ENCODE measurements at regions of chr9 and their contacts with region 1.

Region 1: DNA sequence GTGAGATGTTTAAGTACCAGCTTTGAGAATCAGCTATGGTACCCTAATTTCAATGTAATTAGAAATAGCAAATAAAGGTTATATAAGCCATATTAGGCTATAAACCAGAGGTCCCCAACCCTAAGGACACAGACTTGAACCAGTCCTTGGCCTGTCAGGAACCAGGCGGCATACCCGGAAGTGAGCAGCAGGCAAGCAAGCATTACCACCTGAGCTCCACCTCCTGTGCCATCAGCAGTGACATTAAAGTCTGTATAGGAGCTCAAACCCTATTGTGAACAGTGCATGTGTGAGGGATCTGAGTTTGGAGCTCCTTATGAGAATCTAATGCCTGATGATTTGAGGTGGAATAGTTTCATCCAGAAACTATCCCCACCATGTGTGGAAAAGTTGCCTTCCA is 1009.5 kb downstream of the PTPRD start:
- DNase-seq: no peak
- ATAC-seq: no peak
- H3K4me3 ChIP-seq: no peak overlapping the region
- H3K27ac ChIP-seq: no peak overlapping the region
- H3K4me1 ChIP-seq: no peaks in the 10 kb centered on the region
- H3K27me3 ChIP-seq: no peaks in the 10 kb centered on the region
- CTCF ChIP-seq: no peak

Region 2: DNA sequence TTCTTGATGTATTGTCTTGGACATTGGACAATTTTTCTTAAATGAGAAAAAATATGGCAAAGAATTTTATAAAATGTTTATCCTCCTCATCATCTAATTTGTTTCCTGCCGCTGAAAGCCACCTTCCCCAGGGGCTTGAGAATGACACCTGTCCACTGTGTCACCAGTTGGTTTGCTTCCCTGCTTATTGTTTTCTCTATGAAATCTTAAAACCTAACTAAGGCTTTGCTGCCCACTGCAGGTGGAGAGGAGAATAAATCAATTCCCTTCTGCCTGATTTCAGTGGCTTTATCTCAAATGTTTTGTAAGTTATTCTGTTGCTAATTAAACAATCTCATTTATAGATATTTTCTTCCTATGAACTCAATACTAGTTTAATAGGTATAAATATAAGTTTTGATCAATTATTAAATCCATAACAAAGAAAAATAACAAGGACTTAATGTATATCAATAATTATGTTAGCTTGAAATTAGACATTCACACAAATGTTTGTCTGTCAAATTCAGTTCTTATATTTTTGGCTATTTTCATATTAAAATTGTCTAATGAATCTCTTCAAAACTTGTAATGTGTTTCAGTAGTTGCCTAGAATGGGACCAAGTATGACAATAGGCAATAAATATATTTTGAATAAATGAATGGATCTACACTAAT is 187.0 kb after region 1 on chr9:
- CTCF ChIA-PET with region 1: no interaction called
- POLR2A ChIA-PET with region 1: no interaction called
- in situ Hi-C with region 1: no loop called
- intact Hi-C with region 1: loop called (anchors 2 kb)
- DNase-seq: peak; percentile 13
- ATAC-seq: no peak
- H3K4me3 ChIP-seq: no peak overlapping the region
- H3K27ac ChIP-seq: no peak overlapping the region
- H3K4me1 ChIP-seq: no peaks in the 10 kb centered on the region
- H3K27me3 ChIP-seq: no peaks in the 10 kb centered on the region
- CTCF ChIP-seq: peak; percentile 65

Region 3: GRCh38 chr9:9942764-9943424 is 339.5 kb after region 1 on chr9:
- CTCF ChIA-PET with region 1: no interaction called
- POLR2A ChIA-PET with region 1: no interaction called
- in situ Hi-C with region 1: no loop called
- intact Hi-C with region 1: loop called (anchors 10 kb)
- DNase-seq: peak; percentile 42
- ATAC-seq: no peak
- H3K4me3 ChIP-seq: no peak overlapping the region
- H3K27ac ChIP-seq: no peak overlapping the region
- H3K4me1 ChIP-seq: no peaks in the 10 kb centered on the region
- H3K27me3 ChIP-seq: no peaks in the 10 kb centered on the region
- CTCF ChIP-seq: peak; percentile 67

Measured in Panc1 (cell line).